Panc1 (cell line): ENCODE measurements at regions of chr2 and their contacts with region 1.

Region 1: DNA sequence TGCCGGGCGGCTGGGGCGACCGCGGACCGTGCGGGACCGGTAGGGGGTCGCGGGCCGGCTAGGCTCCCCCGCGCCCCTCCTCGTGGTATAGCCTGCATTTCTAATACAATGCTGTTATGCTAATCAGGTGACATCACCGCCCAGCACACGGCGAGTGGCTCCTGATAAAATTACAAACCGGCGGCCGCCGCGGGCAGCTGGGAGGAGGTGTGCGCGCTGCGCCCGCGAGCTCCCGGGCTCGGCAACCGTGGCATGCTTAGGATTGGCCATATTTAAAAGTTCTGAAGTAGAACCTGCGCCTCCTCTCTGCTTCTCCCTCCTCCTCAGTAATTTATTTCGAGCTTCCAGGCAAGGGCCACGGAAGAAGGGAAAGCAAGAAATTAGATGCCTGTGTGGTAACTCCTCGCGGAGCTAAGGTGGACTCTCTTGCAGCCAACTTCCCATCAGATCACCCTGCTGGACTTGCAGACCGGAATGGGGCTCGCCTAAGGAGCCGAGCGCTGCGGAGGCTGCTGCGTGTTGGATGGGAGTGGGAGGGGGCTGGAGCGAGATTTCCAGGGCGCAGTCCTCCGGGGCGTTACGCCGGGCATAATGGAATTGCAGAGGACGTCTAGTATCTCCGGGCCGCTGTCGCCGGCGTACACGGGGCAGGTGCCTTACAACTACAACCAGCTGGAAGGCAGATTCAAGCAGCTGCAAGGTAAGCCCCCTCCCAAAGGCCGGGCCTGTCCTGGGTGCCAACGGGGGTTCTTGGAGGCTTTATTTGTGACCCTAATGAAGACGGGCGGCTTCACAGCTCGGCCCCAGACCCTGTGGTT is 102.3 kb downstream of the SPTBN1 start:
- DNase-seq: no peak
- ATAC-seq: peak; percentile 82
- H3K4me3 ChIP-seq: peak overlapping the region; percentile 75 to 90
- H3K27ac ChIP-seq: peak overlapping the region; percentile 95
- H3K4me1 ChIP-seq: peaks cover 39% of the 10 kb centered on the region
- H3K27me3 ChIP-seq: no peaks in the 10 kb centered on the region
- CTCF ChIP-seq: no peak

Region 2: DNA sequence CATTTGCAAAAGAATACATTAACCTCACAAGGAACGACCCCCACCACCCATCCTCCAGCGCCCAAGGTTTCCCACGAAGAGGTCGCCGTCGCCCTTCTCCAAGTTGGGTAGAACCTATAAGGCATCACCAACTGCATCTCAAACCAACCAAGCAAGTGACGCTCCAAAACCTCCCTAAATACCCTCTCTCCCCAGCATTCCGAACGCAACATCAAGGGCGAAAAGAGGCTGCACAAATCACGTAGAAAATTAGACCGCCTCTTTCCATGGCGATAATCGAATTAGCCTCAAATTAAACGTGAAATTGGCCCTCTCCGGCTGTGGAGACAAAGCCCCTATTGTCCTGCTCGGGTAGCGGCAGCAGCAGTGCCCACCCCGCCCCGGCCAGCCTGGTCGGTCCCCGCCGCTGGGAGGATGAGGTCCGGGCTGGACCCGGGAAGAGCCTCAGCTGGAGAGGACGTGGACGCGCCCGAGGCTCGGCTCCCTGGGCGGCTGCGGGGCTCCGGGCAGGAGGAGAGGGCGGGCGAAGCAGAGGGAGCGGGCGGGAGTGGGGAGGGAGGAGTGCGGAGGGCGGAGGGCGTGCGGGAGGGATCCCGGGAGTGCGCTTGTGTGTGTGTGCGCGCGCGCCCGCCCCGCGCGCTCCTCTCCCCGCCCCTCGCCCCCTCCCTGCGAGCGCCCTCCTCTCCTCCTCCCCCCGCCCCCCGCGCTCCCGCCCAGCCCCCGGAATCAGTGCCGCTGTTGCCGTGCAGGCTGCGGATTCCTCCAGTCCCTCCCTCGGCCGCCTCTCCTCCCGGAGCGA is 102.6 kb before region 1 on chr2 and contains the start of gene SPTBN1:
- CTCF ChIA-PET with region 1: no interaction called
- POLR2A ChIA-PET with region 1: no interaction called
- in situ Hi-C with region 1: no loop called
- intact Hi-C with region 1: loop called (anchors 10 kb)
- DNase-seq: peak; percentile 36
- ATAC-seq: peak; percentile 89
- H3K4me3 ChIP-seq: peak within 1 kb of the TSS; percentile 86 to 92
- H3K27ac ChIP-seq: peak within 1 kb of the TSS; percentile 87
- H3K4me1 ChIP-seq: peaks cover 26% of the 10 kb centered on the region
- H3K27me3 ChIP-seq: no peaks in the 10 kb centered on the region
- CTCF ChIP-seq: no peak
- total RNA-seq, gene SPTBN1: 169 TPM

Region 3: DNA sequence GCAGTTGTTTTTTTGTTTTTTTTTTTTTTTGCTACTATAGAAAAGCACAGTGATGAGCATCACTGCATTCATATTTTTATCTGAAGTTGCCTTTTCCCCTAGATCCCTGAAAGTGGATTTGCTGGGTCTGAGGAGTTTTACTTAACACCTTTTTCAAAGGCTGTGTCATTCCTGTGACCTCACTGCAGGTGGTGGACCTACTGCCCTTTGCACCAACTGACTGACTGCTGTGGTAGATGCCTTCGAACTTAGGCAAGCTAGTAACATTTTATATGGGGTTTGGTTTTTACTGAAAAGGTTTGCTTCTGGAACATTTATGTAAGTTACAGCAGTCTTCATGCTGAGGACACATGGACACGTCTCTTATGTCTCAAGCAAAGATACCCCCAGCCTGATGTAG is 66.1 kb before region 1 on chr2:
- CTCF ChIA-PET with region 1: interaction called, 10 read pairs
- POLR2A ChIA-PET with region 1: no interaction called
- in situ Hi-C with region 1: no loop called
- intact Hi-C with region 1: no loop called
- DNase-seq: no peak
- ATAC-seq: no peak
- H3K4me3 ChIP-seq: no peak overlapping the region
- H3K27ac ChIP-seq: no peak overlapping the region
- H3K4me1 ChIP-seq: peaks cover 6% of the 10 kb centered on the region
- H3K27me3 ChIP-seq: no peaks in the 10 kb centered on the region
- CTCF ChIP-seq: no peak

Region 4: DNA sequence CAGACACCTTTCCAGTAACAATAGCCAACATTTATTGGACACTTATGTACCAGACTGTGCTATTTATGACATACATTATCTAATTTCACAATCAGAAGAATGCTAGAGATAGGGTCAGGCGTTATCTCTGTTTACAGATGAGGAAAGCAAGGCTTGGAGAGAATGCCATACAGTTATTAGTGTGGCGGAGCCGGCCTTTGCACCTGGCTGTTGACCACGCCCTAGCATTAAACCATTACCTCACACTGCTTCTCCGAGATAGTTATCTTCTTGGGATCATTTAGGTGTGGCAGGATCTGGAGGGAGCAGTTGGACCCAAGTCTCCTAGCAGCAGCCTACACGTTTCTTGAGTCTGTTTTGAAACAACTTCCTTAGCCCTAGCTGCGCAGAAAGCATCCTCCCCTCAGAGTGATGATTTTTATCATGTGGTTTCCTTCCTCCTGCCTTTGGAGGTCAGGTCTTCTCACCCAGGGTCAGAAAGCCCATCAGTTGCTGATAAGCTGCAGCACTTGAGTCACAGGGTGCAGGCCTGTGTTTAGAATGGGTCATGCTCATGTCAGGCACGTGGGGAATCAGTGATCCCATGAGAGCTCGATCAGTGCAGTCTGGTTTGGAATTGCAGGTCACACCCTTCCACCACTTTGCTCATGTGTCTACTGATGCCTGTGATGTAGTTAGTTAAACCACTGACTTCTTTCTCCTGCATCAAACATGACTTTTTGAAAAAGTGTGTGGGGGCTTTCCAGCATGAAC is 15.9 kb after region 1 on chr2:
- CTCF ChIA-PET with region 1: no interaction called
- POLR2A ChIA-PET with region 1: no interaction called
- in situ Hi-C with region 1: no loop called
- intact Hi-C with region 1: no loop called
- DNase-seq: no peak
- ATAC-seq: no peak
- H3K4me3 ChIP-seq: no peak overlapping the region
- H3K27ac ChIP-seq: peak overlapping the region; percentile 90; the same call in 1 of the 2 replicates
- H3K4me1 ChIP-seq: peaks cover 90% of the 10 kb centered on the region
- H3K27me3 ChIP-seq: no peaks in the 10 kb centered on the region
- CTCF ChIP-seq: no peak

Region 5: DNA sequence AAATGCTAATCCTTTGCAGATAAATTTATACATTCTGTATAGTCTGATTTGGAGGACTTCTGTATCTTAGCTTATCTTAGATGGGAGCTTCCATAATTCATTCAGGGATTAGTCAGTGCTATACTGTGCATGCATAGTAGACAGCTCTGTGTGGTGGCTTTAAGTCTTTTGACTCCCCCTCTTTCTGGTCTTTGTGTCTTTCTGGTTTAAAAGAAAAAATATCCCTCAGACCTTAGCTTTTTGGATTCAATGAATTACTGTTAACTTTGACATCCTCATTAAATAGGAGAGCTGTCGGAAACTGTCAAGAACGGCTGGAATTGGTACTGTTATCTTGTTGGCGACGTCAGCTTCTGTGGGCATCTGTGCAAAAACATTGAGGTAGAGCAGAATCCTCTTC is 28.1 kb after region 1 on chr2:
- CTCF ChIA-PET with region 1: no interaction called
- POLR2A ChIA-PET with region 1: interaction called, 10 read pairs
- in situ Hi-C with region 1: no loop called
- intact Hi-C with region 1: no loop called
- DNase-seq: no peak
- ATAC-seq: no peak
- H3K4me3 ChIP-seq: no peak overlapping the region
- H3K27ac ChIP-seq: no peak overlapping the region
- H3K4me1 ChIP-seq: peaks cover 50% of the 10 kb centered on the region
- H3K27me3 ChIP-seq: no peaks in the 10 kb centered on the region
- CTCF ChIP-seq: no peak

Region 6: GRCh38 chr2:55099878-55100820 is 541.8 kb after region 1 on chr2:
- CTCF ChIA-PET with region 1: no interaction called
- POLR2A ChIA-PET with region 1: interaction called, 18 read pairs
- in situ Hi-C with region 1: no loop called
- intact Hi-C with region 1: no loop called
- DNase-seq: no peak
- ATAC-seq: no peak
- H3K4me3 ChIP-seq: no peak overlapping the region
- H3K27ac ChIP-seq: peak overlapping the region; percentile 80; the same call in 1 of the 2 replicates
- H3K4me1 ChIP-seq: peaks cover 14% of the 10 kb centered on the region
- H3K27me3 ChIP-seq: no peaks in the 10 kb centered on the region
- CTCF ChIP-seq: no peak